ENCODE measurements at regions of chr11 and their contacts with region 1.

Region 1: GRCh38 chr11:83285771-83286528 is at the start of gene CCDC90B:
- DNase-seq: peak; percentile 94 to 99 (median 98)

Region 2: DNA sequence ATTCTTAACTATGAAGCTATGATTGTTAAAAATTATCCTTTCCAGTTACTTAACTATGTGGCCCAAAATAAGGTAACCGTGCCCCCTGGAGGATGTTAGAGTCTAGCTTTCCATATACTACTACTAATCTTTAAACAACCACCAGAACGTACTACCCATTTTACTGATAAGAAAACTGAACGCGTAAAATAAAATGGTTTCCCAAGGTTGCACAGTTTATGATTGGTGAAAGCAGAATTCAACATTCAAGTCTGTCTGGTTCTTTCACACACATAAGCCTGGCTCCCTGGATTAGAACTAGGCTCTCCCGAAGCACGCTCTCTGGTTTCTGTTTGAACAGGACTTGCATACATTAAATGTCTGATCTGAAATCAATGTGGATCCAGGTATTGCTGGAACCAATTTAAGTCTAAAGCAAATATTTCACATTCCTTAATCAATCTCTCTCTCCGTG is 438.1 kb after region 1 on chr11:
- intact Hi-C with region 1: loop called (anchors 10 kb)
- DNase-seq: peak in 19 of 42 donors; percentile 19 to 71 (median 41)

Measured in head of caudate nucleus (tissue), 42 donors.